ENCODE measurements at regions of chr2 and their contacts with region 1.

Region 1: DNA sequence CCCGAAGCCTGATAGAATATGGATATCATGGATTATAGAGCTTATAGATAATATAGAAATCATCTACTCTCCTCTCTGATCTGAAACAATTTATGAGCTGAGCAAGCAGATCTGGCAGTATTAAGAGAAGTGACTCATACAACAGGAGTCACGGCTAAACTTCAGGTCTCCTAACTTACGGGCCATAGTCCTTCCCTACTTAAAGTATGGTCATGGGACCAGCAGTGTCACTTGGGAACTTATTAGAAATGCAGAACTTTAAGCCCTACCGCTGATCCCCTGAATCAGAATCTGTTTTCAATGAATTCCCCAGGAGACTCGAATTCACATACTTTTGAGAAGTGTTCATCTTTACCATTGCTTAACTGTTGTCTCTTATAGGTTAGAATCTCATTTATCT is 195.7 kb upstream of the FANCL start:
- DNase-seq: no peak
- CTCF ChIP-seq: no peak

Region 2: GRCh38 chr2:57890464-57890863 is 546.4 kb before region 1 on chr2:
- in situ Hi-C with region 1: loop called (anchors 10 kb)
- DNase-seq: no peak
- CTCF ChIP-seq: no peak

Region 3: DNA sequence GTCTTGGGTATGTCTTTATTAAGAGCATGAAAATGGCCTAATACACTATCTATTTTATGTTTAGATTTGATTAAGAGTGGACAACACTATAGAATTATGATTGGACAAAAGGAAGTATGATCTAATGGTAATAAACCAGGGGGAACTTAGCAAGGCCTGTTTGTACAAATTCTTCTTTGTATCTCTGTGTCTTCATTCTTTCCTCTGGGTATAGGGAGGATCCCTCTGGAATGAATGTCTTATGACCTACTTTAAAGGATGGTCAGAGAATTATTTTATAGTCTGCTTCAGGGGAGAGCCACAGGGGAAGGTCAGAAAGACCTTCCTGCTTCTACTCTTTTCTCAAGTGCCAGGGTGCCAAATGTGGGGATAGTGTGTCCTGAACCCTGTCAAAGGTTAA is 152.9 kb before region 1 on chr2:
- in situ Hi-C with region 1: no loop called
- DNase-seq: no peak
- CTCF ChIP-seq: no peak

Measured in GM13976 (cell line).